IMR-90 (cell line): ENCODE measurements at regions of chr4 and their contacts with region 1.

Region 1: DNA sequence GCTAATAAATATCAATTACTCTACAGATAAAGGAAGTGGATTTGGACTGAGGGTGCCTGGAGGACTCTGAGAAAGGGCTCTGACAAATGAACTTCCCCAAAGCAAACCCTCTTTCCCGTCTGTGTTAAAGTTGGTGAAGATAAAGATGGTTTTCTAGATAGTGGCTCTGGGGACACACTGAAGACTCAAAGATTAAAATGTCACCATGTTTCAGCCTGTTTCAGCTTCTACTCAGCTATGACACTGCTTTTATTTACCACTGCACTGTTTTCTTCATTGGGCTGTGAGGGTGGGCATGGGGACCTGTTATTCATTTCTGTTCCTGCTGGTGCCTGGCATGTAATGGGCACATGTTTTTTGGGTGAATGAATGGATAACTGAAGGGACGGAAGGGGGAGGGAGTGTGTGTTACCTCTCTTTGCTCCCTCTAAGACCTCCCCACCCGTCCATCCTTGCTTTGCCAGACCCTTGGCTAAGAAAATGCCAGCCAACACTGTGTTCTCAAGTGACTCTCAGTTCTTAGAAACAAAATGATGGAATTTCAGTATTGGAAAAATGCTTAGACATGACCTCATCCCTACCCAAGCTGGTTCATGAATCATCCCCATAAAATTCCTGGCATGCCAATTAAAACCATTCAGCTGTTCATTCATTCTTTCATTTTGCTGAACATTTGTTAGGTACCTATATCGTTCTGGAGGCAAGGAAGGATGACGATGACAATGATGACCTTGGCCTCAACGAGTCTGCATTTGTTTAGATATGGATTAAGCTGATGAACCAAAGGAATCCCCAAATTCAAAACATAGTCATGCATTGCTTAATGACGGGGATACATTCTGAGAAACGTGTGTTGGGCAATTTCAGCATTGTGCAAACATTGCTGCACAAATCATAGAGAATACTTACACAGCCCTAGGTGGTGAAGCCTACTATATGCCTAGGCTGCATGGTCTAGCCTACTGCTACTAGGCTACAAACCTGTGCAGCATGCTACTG is 13.4 kb upstream of the STK32B start:
- DNase-seq: peak; percentile 99
- ATAC-seq: peak; percentile 84
- H3K4me3 ChIP-seq: no peak overlapping the region
- H3K27ac ChIP-seq: peak overlapping the region; percentile 96
- H3K4me1 ChIP-seq: peaks cover 35% of the 10 kb centered on the region
- H3K27me3 ChIP-seq: no peaks in the 10 kb centered on the region
- CTCF ChIP-seq: no peak
- POLR2A ChIP-seq: no peak
- RAD21 ChIP-seq: no peak

Region 2: DNA sequence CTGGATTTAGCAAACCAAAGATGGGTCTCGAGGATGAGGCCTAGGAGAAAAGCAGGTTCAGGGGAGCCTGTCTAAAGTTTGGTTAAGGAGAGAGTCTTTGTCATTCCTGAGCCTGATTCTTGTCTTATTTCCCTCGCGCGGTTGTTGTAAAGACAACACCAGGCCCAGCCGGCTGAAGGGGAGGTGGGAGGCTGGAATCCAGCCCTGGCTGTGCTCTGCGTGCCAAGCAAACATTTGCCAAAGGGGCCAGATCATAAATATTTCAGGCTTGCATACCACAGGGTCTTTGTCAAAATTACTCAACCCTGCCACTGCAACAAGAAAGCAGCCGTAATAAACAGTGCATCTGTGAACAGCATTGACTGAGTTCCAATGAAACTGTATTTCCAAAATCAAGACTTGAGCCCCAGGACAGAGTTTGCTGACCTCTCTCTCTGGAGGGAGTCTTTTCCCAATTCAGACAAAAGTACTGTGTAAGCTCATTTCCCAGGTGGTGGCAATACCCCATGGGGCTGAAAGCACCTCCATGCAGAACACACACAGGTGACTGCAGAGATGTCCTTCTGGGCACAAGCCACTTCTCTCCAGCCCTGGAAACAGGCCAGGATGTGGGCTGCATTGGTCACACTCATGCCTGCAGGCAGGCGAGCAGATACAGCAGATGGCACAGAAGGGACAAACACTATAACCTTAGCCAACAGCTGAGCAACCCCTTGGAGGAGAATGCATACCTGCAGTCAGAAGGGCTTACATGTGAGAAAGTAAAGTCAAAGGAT is 333.8 kb after region 1 on chr4:
- CTCF ChIA-PET with region 1: no interaction called
- POLR2A ChIA-PET with region 1: no interaction called
- dilution Hi-C with region 1: no loop called
- in situ Hi-C with region 1: no loop called
- intact Hi-C with region 1: loop called (anchors 5 kb)
- DNase-seq: peak; percentile 80
- ATAC-seq: peak; percentile 60
- H3K4me3 ChIP-seq: no peak overlapping the region
- H3K27ac ChIP-seq: peak overlapping the region; percentile 61
- H3K4me1 ChIP-seq: peaks cover 9% of the 10 kb centered on the region
- H3K27me3 ChIP-seq: no peaks in the 10 kb centered on the region
- CTCF ChIP-seq: no peak
- POLR2A ChIP-seq: no peak
- RAD21 ChIP-seq: no peak